B cell (primary cell): ENCODE measurements at regions of chr13 and their contacts with region 1.

Region 1: GRCh38 chr13:28324181-28324789 is 170.6 kb downstream of the FLT1 start:
- DNase-seq: peak; percentile 80
- ATAC-seq: peak; percentile 75
- H3K4me3 ChIP-seq: no peak overlapping the region
- H3K4me3 Mint-ChIP-seq: no peak overlapping the region
- H3K27ac ChIP-seq: no peak overlapping the region
- H3K27ac Mint-ChIP-seq: no peak overlapping the region
- H3K4me1 ChIP-seq: peaks cover 10 to 12% of the 10 kb centered on the region in 2 donors
- H3K4me1 Mint-ChIP-seq: peaks cover 5% of the 10 kb centered on the region
- H3K27me3 ChIP-seq: no peaks in the 10 kb centered on the region
- H3K27me3 Mint-ChIP-seq: no peaks in the 10 kb centered on the region
- CTCF ChIP-seq: peak; percentile 77

Region 2: DNA sequence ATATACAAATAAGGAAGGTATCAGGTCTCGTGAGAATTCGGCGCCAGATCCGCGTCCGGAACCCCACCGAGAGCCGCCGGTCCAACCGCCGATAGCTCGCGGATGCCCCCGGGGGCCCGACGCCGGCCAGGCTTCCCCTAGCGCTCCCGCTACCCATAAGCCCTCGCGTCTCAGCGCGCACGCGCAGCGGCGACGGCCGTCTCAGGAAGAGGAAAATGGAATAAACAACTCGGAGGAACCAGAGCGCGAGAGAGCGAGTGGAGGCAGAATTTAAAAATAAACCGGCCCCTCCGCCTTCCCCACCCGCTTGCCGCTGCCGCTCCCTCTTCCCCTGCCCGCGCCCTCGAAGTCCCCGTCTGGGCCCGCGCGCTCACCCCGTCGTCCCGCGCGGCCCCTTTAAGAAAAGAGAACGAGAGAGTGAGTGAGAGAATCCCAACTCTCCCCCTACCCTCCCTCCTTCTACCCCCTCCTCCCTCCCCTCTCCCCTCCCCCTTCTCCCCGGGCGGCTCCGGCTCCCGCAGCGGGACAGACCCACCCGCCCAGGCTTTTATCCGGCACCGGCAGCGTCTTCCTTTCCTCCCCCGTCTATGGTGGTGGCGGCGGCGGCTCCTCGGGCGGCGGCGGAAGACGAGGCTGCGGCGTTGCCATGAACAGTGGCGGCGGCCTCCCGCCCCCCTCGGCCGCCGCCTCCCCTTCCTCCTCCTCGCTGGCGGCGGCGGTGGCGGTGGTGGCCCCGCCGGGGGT is 186.1 kb before region 1 on chr13 and contains the start of gene PAN3:
- CTCF ChIA-PET with region 1: no interaction called
- POLR2A ChIA-PET with region 1: no interaction called
- intact Hi-C with region 1: no loop called
- DNase-seq: peak; percentile 96
- ATAC-seq: peak; percentile 65
- H3K4me3 ChIP-seq: peak within 1 kb of the TSS; percentile 80 to 97 (median 93)
- H3K4me3 Mint-ChIP-seq: peak within 1 kb of the TSS; percentile 87
- H3K27ac ChIP-seq: peak within 1 kb of the TSS; percentile 92 to 95
- H3K27ac Mint-ChIP-seq: peak within 1 kb of the TSS; percentile 99
- H3K4me1 ChIP-seq: peaks cover 37 to 43% of the 10 kb centered on the region in 2 donors
- H3K4me1 Mint-ChIP-seq: peaks cover 50% of the 10 kb centered on the region
- H3K27me3 ChIP-seq: no peaks in the 10 kb centered on the region
- H3K27me3 Mint-ChIP-seq: no peaks in the 10 kb centered on the region
- CTCF ChIP-seq: no peak
- total RNA-seq, gene PAN3: 117 and 119 TPM in 2 replicates

Region 3: DNA sequence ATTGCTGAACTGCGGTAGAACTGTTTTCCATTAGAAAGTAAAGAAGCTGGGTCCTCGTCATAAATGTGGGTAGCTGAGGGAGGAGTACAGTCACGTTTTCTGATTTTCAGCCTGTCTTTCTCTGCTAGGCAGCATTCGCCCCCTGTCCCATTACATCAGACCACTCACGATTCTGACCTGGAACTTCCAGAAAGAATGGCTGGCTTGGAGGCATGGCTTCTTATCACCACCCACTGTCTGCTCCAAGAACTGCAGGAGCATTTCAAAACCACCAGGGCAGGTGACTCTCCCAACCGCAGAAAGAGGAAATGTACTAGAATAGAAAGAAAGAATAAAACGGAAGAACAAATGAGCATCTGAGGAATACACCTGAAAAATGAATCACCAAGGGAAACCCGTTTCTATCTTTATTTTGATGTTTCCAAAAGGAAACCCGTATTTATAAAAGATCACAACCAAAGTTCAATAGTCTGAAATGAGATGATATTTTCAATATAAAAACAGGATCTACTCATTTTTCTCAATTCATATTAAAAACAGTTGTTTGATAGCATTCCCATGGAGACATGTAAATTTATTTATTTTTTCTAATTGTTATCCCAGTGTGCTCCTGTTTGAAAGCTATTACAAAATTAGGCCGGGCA is 312.5 kb after region 1 on chr13:
- CTCF ChIA-PET with region 1: interaction called, 67 read pairs
- POLR2A ChIA-PET with region 1: interaction called, 3 read pairs
- intact Hi-C with region 1: loop called (anchors 1 kb)
- DNase-seq: peak; percentile 86
- ATAC-seq: peak; percentile 81
- H3K4me3 ChIP-seq: peak overlapping the region in 1 of 5 experiments; percentile 24
- H3K4me3 Mint-ChIP-seq: peak overlapping the region; percentile 57
- H3K27ac ChIP-seq: peak overlapping the region; percentile 25 to 72
- H3K27ac Mint-ChIP-seq: peak overlapping the region; percentile 51
- H3K4me1 ChIP-seq: peaks cover 36 to 42% of the 10 kb centered on the region in 2 donors
- H3K4me1 Mint-ChIP-seq: peaks cover 39% of the 10 kb centered on the region
- H3K27me3 ChIP-seq: no peaks in the 10 kb centered on the region
- H3K27me3 Mint-ChIP-seq: peaks cover 5% of the 10 kb centered on the region
- CTCF ChIP-seq: peak; percentile 73

Region 4: DNA sequence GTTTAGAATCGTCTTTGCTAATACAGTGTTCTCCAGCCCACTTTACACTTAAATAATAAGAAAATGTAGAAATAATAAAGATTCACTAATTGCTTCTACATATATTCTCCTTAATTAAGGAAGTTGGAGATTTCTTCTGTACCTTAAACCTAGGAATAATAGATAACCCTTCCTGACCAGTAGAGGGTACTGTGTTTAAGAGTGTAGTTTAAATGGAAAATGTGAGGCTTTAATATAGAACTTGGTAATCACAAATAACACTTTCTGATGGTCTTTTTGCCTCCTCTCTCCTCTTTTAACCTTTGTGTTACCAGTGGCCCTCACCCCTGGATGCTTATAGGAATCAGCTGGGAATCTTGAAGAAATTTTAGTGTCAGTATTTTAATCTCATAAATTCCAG is 355.3 kb after region 1 on chr13:
- CTCF ChIA-PET with region 1: interaction called, 10 read pairs
- POLR2A ChIA-PET with region 1: no interaction called
- intact Hi-C with region 1: no loop called
- DNase-seq: no peak
- ATAC-seq: no peak
- H3K4me3 ChIP-seq: no peak overlapping the region
- H3K4me3 Mint-ChIP-seq: no peak overlapping the region
- H3K27ac ChIP-seq: no peak overlapping the region
- H3K27ac Mint-ChIP-seq: no peak overlapping the region
- H3K4me1 ChIP-seq: no peaks in the 10 kb centered on the region
- H3K4me1 Mint-ChIP-seq: no peaks in the 10 kb centered on the region
- H3K27me3 ChIP-seq: no peaks in the 10 kb centered on the region
- H3K27me3 Mint-ChIP-seq: no peaks in the 10 kb centered on the region
- CTCF ChIP-seq: no peak

Region 5: GRCh38 chr13:28718543-28719226 is 394.4 kb after region 1 on chr13 and contains the start of gene SLC46A3:
- CTCF ChIA-PET with region 1: no interaction called
- POLR2A ChIA-PET with region 1: no interaction called
- intact Hi-C with region 1: loop called (anchors 2 kb)
- DNase-seq: peak; percentile 97
- ATAC-seq: peak; percentile 98
- H3K4me3 ChIP-seq: peak within 1 kb of the TSS; percentile 61 to 91 (median 87)
- H3K4me3 Mint-ChIP-seq: peak within 1 kb of the TSS; percentile 96
- H3K27ac ChIP-seq: peak within 1 kb of the TSS; percentile 84 to 89
- H3K27ac Mint-ChIP-seq: peak within 1 kb of the TSS; percentile 98
- H3K4me1 ChIP-seq: peaks cover 14 to 18% of the 10 kb centered on the region in 2 donors
- H3K4me1 Mint-ChIP-seq: peaks cover 24% of the 10 kb centered on the region
- H3K27me3 ChIP-seq: no peaks in the 10 kb centered on the region
- H3K27me3 Mint-ChIP-seq: no peaks in the 10 kb centered on the region
- CTCF ChIP-seq: peak; percentile 24
- total RNA-seq, gene SLC46A3: 12.4 and 13.1 TPM in 2 replicates

Region 6: GRCh38 chr13:28792992-28793391 is 468.7 kb after region 1 on chr13:
- CTCF ChIA-PET with region 1: interaction called, 62 read pairs
- POLR2A ChIA-PET with region 1: no interaction called
- intact Hi-C with region 1: no loop called
- DNase-seq: no peak
- ATAC-seq: no peak
- H3K4me3 ChIP-seq: no peak overlapping the region
- H3K4me3 Mint-ChIP-seq: no peak overlapping the region
- H3K27ac ChIP-seq: no peak overlapping the region
- H3K27ac Mint-ChIP-seq: no peak overlapping the region
- H3K4me1 ChIP-seq: peaks cover 0 to 5% of the 10 kb centered on the region in 2 donors
- H3K4me1 Mint-ChIP-seq: peaks cover 3% of the 10 kb centered on the region
- H3K27me3 ChIP-seq: peaks cover 0 to 9% (median 2%) of the 10 kb centered on the region in 4 experiments
- H3K27me3 Mint-ChIP-seq: peaks cover 48% of the 10 kb centered on the region
- CTCF ChIP-seq: no peak